Activated T-helper 2 cell treated with anti-CD3 and anti-CD28 coated beads, Interferon-gamma antibody, Interleukin-2, Interleukin-4, amounts not matched to agents 10 μg/mL and 5 μg/mL and 100 μg/mL, durations not matched to agents 14 hours and 24 hours and 36 hours (primary cell): ENCODE measurements at regions of chr6 and their contacts with region 1.

Region 1: GRCh38 chr6:30344868-30345671 is at the start of gene RPP21:
- DNase-seq: peak; percentile 84
- H3K4me3 Mint-ChIP-seq: peak within 1 kb of the TSS; percentile 88
- H3K27ac Mint-ChIP-seq: peak within 1 kb of the TSS; percentile 77
- H3K4me1 Mint-ChIP-seq: peaks cover 34% of the 10 kb centered on the region
- H3K27me3 Mint-ChIP-seq: peaks cover 16% of the 10 kb centered on the region
- total RNA-seq, gene RPP21: 40.6 and 41.9 TPM in 2 replicates

Region 2: GRCh38 chr6:29872791-29873190 is 472.3 kb before region 1 on chr6:
- intact Hi-C with region 1: no loop called
- DNase-seq: no peak
- H3K4me3 Mint-ChIP-seq: no peak overlapping the region
- H3K27ac Mint-ChIP-seq: no peak overlapping the region
- H3K4me1 Mint-ChIP-seq: no peaks in the 10 kb centered on the region
- H3K27me3 Mint-ChIP-seq: peaks cover 12% of the 10 kb centered on the region

Region 3: DNA sequence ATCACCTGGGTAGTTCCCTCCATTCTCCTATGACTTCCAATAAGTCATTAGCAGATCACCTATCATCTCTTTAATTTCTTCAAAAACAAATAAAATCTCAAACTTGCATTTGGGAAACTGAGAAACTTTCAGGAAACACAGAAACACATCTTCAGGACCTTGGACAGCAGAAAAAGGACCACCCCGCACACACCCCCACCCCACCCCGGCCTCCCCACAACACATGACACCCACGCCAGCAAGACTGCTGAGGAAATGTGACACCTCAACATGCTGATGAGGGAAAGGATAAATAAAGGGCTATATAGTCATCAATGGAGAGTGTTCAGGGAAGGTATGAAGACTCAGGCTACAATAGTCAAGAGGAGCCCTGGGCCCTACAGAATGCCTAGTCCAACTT is 34.0 kb before region 1 on chr6:
- intact Hi-C with region 1: no loop called
- DNase-seq: no peak
- H3K4me3 Mint-ChIP-seq: no peak overlapping the region
- H3K27ac Mint-ChIP-seq: no peak overlapping the region
- H3K4me1 Mint-ChIP-seq: peaks cover 3% of the 10 kb centered on the region
- H3K27me3 Mint-ChIP-seq: no peaks in the 10 kb centered on the region

Region 4: DNA sequence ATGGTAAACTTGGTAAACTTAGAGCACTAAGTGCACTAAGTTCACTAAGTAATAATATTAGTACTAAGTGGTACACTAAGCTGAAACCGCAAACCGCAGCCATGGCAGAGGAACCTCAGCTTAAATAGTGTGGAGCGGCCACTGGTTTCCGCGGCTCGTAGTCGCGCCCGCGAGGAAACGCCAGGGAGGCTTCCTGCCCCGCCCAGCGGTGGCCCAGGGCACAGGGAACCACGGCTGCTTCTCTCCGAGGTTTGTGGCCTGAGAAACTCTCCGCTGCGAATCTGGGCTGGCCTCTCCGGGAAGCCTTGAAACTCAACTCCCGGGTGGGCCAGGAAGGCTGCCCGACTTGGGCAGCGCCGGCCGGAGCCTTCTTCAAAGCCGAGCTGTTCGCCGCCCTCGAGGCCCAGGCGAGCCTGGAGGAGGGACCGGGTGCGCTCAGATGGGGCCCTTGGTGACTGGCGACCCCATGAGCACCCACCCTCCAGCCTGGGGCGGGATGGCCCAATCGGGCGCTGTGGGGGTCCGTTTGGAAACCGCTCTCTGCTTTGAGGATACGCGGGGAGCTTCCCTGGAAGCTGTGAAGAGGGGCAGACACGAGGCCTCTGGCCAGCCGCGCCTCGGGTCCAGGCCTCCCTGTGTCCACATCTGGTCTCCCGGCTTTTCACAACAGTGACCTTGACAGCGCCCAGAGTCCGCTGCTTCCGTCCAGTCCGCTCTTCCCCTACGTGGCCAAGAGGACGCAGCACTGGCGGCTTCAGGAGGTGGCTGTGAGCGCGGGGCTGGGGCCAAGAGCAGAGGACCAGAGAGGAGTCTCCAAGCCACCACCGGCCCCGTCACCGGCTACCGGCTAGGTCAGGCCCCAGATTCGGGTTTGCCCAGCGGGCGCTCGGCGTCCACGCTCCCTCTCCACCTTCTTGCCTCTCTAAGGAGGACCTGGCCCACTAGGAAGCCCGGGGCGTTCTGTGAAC is 118.9 kb after region 1 on chr6:
- intact Hi-C with region 1: loop called (anchors 5 kb)
- DNase-seq: peak; percentile 57
- H3K4me3 Mint-ChIP-seq: no peak overlapping the region
- H3K27ac Mint-ChIP-seq: no peak overlapping the region
- H3K4me1 Mint-ChIP-seq: peaks cover 13% of the 10 kb centered on the region
- H3K27me3 Mint-ChIP-seq: peaks cover 90% of the 10 kb centered on the region